ENCODE measurements at regions of chr2 and their contacts with region 1.

Region 1: DNA sequence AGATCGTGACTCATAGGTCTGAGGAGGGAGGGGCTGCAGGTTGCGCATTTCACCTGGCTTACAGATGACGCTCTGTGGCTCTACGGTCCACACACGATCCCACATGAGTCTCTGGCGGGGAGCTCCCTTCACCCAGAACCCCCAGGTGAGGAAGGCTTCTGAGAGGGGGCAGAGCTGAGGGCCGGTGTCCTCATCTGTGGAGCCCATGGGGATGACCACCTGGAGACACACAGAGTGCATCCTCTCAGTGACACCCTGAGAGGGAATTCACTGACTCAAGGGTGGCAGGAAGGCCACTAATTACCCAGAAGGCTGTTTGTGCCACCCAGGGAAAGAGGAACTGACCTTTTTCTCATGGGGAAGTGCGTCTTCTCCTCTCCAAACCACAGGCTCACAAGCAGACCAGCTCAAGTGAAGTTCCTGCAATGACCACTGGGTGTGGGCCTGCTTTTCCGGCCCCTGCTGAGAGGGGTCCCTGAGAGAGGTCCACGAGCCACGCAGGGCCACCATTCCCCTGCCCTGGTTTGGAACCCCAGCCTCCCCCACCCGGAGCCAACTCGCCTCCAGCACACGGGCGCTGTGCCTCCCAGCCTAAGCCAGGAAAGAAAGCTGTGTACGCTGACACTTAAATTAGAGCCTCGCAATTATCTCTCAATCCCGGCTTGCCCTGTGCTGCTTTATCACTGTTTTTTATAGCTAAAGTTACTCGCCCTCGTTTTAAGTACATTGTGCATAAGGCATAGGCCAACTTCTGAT is 114.1 kb downstream of the BCL11A start:
- DNase-seq: peak; percentile 94
- ATAC-seq: peak; percentile 92
- H3K4me3 ChIP-seq: peak overlapping the region in 4 of 5 experiments; percentile 1 to 50 (median 31)
- H3K4me3 Mint-ChIP-seq: peak overlapping the region; percentile 88
- H3K27ac ChIP-seq: peak overlapping the region; percentile 88 to 90
- H3K27ac Mint-ChIP-seq: peak overlapping the region; percentile 100
- H3K4me1 ChIP-seq: peaks cover 75 to 81% of the 10 kb centered on the region in 2 donors
- H3K4me1 Mint-ChIP-seq: peaks cover 80% of the 10 kb centered on the region
- H3K27me3 ChIP-seq: no peaks in the 10 kb centered on the region
- H3K27me3 Mint-ChIP-seq: no peaks in the 10 kb centered on the region
- CTCF ChIP-seq: peak; percentile 84

Region 2: GRCh38 chr2:60337140-60337494 is 102.3 kb before region 1 on chr2:
- CTCF ChIA-PET with region 1: interaction called, 16 read pairs
- POLR2A ChIA-PET with region 1: interaction called, 5 read pairs
- intact Hi-C with region 1: no loop called
- DNase-seq: peak; percentile 68
- ATAC-seq: peak; percentile 83
- H3K4me3 ChIP-seq: no peak overlapping the region
- H3K4me3 Mint-ChIP-seq: peak overlapping the region; percentile 27
- H3K27ac ChIP-seq: peak overlapping the region; percentile 89 to 91
- H3K27ac Mint-ChIP-seq: peak overlapping the region; percentile 91
- H3K4me1 ChIP-seq: peaks cover 46 to 72% of the 10 kb centered on the region in 2 donors
- H3K4me1 Mint-ChIP-seq: peaks cover 66% of the 10 kb centered on the region
- H3K27me3 ChIP-seq: no peaks in the 10 kb centered on the region
- H3K27me3 Mint-ChIP-seq: no peaks in the 10 kb centered on the region
- CTCF ChIP-seq: no peak

Region 3: DNA sequence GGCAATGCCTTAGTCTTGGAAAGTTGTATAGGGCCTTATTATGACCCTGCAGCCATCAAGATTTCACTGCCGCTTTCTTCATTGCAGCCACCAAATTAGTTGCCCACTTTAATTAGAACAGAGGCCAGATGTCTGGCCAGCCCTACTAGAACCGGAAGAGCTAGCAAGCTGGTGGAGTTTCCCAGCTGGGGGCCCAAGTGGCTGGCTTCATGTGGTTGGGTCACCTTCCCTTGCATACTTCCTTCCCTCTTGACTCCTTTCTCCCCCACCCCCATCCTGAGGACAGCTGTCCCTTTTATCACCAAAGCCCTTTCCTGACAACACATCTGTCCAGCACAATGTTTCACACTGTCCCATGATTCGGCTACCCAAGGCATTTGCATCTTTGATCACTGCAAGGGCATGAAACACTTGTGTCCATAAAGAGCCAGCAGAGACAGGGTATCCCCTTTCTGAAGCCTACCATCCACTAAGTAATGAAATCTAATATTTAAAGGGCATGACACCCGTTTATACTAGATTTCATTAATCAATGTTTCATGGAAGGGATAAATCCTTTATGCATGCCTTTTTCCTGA is 73.2 kb before region 1 on chr2:
- CTCF ChIA-PET with region 1: interaction called, 15 read pairs
- POLR2A ChIA-PET with region 1: no interaction called
- intact Hi-C with region 1: no loop called
- DNase-seq: peak; percentile 60
- ATAC-seq: peak; percentile 50
- H3K4me3 ChIP-seq: peak overlapping the region in 1 of 5 experiments; percentile 41
- H3K4me3 Mint-ChIP-seq: peak overlapping the region; percentile 53
- H3K27ac ChIP-seq: peak overlapping the region; percentile 60 to 81
- H3K27ac Mint-ChIP-seq: peak overlapping the region; percentile 89
- H3K4me1 ChIP-seq: peaks cover 92 to 96% of the 10 kb centered on the region in 2 donors
- H3K4me1 Mint-ChIP-seq: peaks cover 96% of the 10 kb centered on the region
- H3K27me3 ChIP-seq: no peaks in the 10 kb centered on the region
- H3K27me3 Mint-ChIP-seq: no peaks in the 10 kb centered on the region
- CTCF ChIP-seq: no peak

Region 4: DNA sequence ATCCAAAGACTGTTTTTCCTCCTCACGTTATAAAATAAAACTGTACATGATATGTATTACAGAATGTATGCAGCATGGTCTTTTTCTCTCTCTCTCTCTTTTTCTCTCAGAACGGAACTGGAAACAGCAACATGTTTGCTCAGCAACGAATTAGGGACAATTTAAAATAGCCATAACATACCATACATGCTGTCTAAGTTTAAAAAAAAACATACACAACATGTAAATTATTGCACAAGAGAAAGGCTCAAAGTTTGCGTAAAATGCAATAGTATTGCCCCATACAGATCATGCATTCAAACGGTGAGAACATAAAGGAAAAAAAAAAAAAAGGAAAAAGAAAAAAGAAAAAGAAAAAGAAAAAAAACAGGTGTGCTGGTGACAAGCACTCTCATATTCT is 20.5 kb after region 1 on chr2:
- CTCF ChIA-PET with region 1: interaction called, 10 read pairs
- POLR2A ChIA-PET with region 1: interaction called, 3 read pairs
- intact Hi-C with region 1: no loop called
- DNase-seq: no peak
- ATAC-seq: no peak
- H3K4me3 ChIP-seq: no peak overlapping the region
- H3K4me3 Mint-ChIP-seq: no peak overlapping the region
- H3K27ac ChIP-seq: peak overlapping the region in 1 of 2 donors; percentile 52
- H3K27ac Mint-ChIP-seq: peak overlapping the region; percentile 68
- H3K4me1 ChIP-seq: peaks cover 15 to 21% of the 10 kb centered on the region in 2 donors
- H3K4me1 Mint-ChIP-seq: peaks cover 53% of the 10 kb centered on the region
- H3K27me3 ChIP-seq: no peaks in the 10 kb centered on the region
- H3K27me3 Mint-ChIP-seq: no peaks in the 10 kb centered on the region
- CTCF ChIP-seq: no peak

Region 5: DNA sequence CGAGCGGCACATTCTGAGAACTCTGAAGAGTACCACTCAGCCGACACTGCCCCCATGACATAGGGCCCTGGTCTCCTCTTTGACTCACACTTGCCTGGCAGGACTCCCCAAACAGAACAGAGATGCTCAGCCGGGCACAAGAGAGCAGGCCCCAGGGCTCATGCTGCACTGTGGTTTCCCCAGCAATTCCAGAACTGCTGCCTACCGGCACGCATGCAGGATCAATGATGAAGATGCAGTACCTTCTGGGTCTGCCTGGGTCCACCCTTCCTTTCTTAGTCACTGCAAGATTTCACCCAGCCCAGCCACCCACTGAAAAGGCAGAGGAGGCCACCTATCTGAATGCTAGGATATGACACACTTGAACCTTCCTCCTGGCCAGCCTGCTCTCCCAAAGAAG is 64.7 kb after region 1 on chr2:
- CTCF ChIA-PET with region 1: interaction called, 20 read pairs
- POLR2A ChIA-PET with region 1: interaction called, 3 read pairs
- intact Hi-C with region 1: no loop called
- DNase-seq: no peak
- ATAC-seq: peak; percentile 36
- H3K4me3 ChIP-seq: peak overlapping the region in 2 of 5 experiments; percentile 1 to 32
- H3K4me3 Mint-ChIP-seq: peak overlapping the region; percentile 68
- H3K27ac ChIP-seq: peak overlapping the region; percentile 48 to 93
- H3K27ac Mint-ChIP-seq: peak overlapping the region; percentile 92
- H3K4me1 ChIP-seq: peaks cover 96% of the 10 kb centered on the region in 2 donors
- H3K4me1 Mint-ChIP-seq: peaks cover 94% of the 10 kb centered on the region
- H3K27me3 ChIP-seq: no peaks in the 10 kb centered on the region
- H3K27me3 Mint-ChIP-seq: no peaks in the 10 kb centered on the region
- CTCF ChIP-seq: peak; percentile 37

Region 6: DNA sequence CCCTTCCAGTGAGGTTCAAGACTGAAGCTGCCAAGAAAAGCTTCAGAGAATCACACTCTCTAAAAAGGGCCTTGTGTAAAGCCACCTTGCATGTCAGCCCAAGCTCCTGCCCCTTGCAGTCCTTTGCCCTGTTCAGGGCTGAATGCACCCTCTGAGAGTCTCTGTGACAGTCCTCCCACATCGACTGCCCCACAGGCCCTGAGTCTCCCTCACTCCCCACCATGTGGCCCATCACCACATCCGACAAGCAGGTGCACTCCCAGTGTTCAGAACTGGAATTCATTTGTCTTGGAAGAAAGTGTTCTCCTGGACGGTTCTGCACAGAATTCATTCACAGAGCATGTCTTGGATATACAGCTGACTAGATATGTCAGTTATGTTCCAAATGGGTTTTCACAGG is 83.1 kb after region 1 on chr2:
- CTCF ChIA-PET with region 1: interaction called, 11 read pairs
- POLR2A ChIA-PET with region 1: no interaction called
- intact Hi-C with region 1: loop called (anchors 2 kb)
- DNase-seq: no peak
- ATAC-seq: no peak
- H3K4me3 ChIP-seq: no peak overlapping the region
- H3K4me3 Mint-ChIP-seq: peak overlapping the region; percentile 40
- H3K27ac ChIP-seq: peak overlapping the region in 1 of 2 donors; percentile 70
- H3K27ac Mint-ChIP-seq: peak overlapping the region; percentile 78
- H3K4me1 ChIP-seq: peaks cover 92 to 100% of the 10 kb centered on the region in 2 donors
- H3K4me1 Mint-ChIP-seq: peaks cover 94% of the 10 kb centered on the region
- H3K27me3 ChIP-seq: no peaks in the 10 kb centered on the region
- H3K27me3 Mint-ChIP-seq: no peaks in the 10 kb centered on the region
- CTCF ChIP-seq: no peak

Region 7: DNA sequence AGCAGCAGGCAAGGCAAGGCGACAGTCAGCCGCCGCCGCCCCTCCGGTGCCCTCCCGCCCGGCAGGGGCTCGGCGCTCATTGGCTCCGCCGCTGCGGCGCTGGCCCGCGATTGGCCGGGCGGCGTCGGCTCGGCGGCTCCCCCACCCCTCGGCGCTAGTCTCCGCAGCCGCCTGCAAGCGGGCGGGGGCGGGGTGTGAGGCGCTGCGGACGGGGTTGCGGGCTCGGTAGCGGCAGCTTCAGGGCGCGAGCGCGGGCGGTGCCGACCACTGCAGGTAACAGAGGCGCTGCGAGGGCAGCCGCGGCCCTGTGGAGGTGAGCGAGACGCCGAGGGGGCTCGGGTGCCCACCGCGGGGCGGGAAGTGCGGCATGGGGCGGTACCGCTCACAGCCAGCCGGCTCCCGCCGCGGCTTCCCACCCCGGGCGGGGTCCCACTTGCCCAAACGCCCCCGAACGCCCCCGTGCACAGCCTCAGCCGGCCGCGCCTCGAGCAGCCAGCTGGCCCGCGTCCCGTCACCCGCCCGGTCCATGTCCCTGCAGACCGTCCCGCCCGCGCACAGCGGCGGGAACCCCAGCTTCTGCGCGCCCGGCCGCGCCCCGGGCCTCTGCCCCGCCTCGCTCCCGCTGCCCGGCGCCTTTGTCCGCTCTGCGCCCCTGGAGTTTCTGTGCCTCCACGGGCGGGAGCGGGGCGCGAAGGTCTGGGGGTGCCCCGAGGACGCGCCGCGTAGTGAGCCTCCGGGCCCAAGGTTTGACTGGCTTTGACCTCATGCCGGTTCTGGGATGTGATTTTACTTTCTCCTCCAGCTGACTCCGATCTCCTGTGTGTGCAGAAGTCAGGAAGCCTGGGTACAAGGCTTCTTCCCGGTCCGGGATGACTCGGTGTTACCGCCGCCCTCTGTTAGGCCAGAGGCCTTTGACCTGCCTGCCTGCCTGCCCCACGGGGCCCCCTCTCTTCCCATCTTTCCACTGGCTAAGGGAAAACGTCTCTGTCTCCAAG is 626.6 kb after region 1 on chr2 and contains the start of gene SANBR:
- CTCF ChIA-PET with region 1: no interaction called
- POLR2A ChIA-PET with region 1: no interaction called
- intact Hi-C with region 1: no loop called
- DNase-seq: peak; percentile 89
- ATAC-seq: peak; percentile 98
- H3K4me3 ChIP-seq: peak within 1 kb of the TSS; percentile 45 to 81 (median 70)
- H3K4me3 Mint-ChIP-seq: peak within 1 kb of the TSS; percentile 96
- H3K27ac ChIP-seq: peak within 1 kb of the TSS in 1 of 2 donors; percentile 24
- H3K27ac Mint-ChIP-seq: peak within 1 kb of the TSS; percentile 89
- H3K4me1 ChIP-seq: peaks cover 12 to 17% of the 10 kb centered on the region in 2 donors
- H3K4me1 Mint-ChIP-seq: peaks cover 13% of the 10 kb centered on the region
- H3K27me3 ChIP-seq: no peaks in the 10 kb centered on the region
- H3K27me3 Mint-ChIP-seq: no peaks in the 10 kb centered on the region
- CTCF ChIP-seq: no peak
- total RNA-seq, gene SANBR: 6.6 and 7.4 TPM in 2 replicates

Region 8: GRCh38 chr2:61125123-61125710 is 685.8 kb after region 1 on chr2:
- CTCF ChIA-PET with region 1: no interaction called
- POLR2A ChIA-PET with region 1: no interaction called
- intact Hi-C with region 1: no loop called
- DNase-seq: peak; percentile 19
- ATAC-seq: peak; percentile 14
- H3K4me3 ChIP-seq: no peak overlapping the region
- H3K4me3 Mint-ChIP-seq: no peak overlapping the region
- H3K27ac ChIP-seq: no peak overlapping the region
- H3K27ac Mint-ChIP-seq: no peak overlapping the region
- H3K4me1 ChIP-seq: no peaks in the 10 kb centered on the region
- H3K4me1 Mint-ChIP-seq: peaks cover 6% of the 10 kb centered on the region
- H3K27me3 ChIP-seq: no peaks in the 10 kb centered on the region
- H3K27me3 Mint-ChIP-seq: no peaks in the 10 kb centered on the region
- CTCF ChIP-seq: no peak